HEK293T (cell line): ENCODE measurements at regions of chr16 and their contacts with region 1.

Region 1: GRCh38 chr16:67561824-67562525 is 351 bp upstream of the CTCF start:
- DNase-seq: peak; percentile 97

Region 2: GRCh38 chr16:67546761-67547422 is 15.1 kb before region 1 on chr16:
- CTCF ChIA-PET with region 1: interaction called, 22 read pairs
- POLR2A ChIA-PET with region 1: interaction called, 9 read pairs
- DNase-seq: peak; percentile 87

Region 3: DNA sequence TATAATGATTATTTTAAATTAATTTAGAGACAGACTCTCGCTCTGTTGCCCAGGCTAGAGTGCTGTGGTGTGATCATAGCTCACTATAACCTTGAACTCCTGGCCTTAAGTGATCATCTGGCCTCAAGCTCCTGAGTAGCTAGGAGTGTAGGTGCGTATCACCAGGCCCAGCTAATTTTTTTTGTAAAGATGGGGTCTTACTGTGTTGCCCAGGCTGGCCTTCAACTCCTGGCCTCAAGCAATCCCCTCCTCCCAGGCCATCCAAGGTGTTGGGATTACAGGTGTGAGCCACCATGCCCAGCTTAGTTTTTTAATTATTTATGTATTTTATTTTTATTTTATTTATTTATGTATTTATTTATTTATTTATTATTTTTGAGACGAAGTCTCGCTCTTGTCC is 18.2 kb after region 1 on chr16:
- CTCF ChIA-PET with region 1: no interaction called
- POLR2A ChIA-PET with region 1: no interaction called
- DNase-seq: no peak

Region 4: GRCh38 chr16:67641779-67642708 is 80.1 kb after region 1 on chr16:
- CTCF ChIA-PET with region 1: interaction called, 12 read pairs
- POLR2A ChIA-PET with region 1: interaction called, 19 read pairs
- DNase-seq: no peak

Region 5: DNA sequence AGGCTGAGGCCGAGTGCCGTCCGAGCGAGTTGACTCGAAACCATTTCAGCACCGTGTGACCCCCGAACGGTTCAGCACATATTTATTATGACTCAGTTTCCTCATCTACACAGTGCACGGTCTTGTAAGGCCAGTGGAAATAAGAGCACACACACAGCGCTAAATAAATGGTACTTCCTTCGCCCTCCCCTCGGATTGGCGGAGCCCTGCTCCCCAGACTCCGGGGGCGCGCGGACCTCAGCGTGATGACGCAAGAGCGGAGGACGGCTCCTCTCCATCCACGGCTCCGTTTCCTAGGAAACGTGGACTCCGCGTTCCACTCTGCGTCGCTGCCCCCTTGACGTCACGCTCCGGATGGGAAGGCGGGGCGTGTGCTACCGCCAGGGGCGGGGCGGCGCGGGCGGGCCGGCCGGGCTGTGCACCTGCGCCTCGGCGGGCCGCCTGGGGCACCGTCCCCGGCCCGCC is 98.6 kb after region 1 on chr16 and contains the start of gene PARD6A:
- CTCF ChIA-PET with region 1: no interaction called
- POLR2A ChIA-PET with region 1: interaction called, 19 read pairs
- DNase-seq: peak; percentile 94